ENCODE measurements at regions of chr17 and their contacts with region 1.

Region 1: DNA sequence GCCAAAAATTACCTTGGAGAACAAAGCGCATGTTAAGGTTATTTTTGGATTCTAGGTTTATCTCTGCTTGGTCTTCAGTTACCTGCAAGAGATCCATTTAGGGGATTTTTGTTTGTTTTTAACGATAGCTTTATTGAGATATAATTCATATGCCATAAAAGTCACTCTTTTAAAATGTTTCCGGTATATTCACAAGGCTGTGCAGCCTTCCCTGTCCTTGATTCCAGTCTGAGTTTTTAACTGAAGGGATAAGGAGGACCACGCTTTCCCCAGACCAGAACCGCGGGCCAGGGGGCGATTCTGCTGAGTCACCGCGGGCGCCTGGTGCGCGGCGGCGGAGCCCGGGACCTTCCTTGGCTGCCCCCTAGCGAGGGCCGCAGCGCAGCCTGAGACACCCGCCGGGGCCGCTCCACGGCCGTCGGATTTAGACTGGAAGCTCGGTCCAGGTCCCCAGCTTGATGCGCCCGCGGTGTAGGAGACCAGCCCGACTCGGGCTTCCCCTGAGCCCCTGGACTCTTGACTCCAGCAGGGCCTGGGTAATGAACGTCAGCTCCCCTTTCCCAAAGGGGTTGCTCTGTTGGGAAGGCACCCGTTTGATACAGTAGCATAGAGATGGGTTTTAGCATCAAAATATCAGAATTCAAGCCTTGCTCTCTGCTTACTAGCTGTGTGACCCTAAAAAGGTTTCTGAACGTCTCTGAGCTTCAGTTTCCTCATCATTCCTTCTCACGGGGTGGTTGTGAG is 50.0 kb upstream of the STH start:
- DNase-seq: peak; percentile 39 to 84
- H3K4me3 ChIP-seq: peak overlapping the region in 2 of 4 experiments; percentile 15 to 45; a peak in 3 of 8 replicates
- H3K27ac ChIP-seq: no peak overlapping the region
- H3K4me1 ChIP-seq: peaks cover 0 to 6% (median 2%) of the 10 kb centered on the region in 4 experiments; a peak in 4 of 7 replicates
- H3K27me3 ChIP-seq: peaks cover 0 to 12% (median 11%) of the 10 kb centered on the region in 4 experiments; a peak in 6 of 7 replicates
- CTCF ChIP-seq: peak; percentile 62 to 79 (median 65)
- EP300 ChIP-seq: peak in 1 of 2 experiments; percentile 21; a peak in 1 of 3 replicates
- POLR2A ChIP-seq: no peak
- RAD21 ChIP-seq: peak; percentile 55 to 67

Region 2: DNA sequence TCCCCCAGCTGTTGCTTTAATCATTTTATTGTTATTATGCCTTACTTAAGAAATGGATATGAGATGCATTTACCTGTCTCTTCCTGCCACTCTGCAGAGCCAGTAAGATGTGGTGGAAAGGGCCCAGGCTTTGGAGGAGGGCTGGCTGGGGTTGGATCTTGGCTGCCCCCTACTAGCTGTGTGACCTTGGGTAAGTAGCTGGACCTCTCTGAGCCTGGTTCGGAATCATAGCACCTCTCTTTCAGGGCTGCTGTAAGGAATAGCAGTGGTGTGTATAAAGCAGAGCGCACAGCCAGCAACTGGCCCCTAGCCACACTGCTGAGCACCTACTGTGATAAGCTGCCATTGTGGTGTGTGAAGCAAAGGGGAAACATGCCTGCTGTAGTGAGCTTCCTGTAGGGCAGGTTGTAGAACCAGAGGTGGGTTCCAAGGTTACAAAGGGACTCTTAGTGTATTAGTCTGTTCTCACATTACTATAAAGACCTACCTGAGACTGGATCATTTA is 30.8 kb before region 1 on chr17:
- CTCF ChIA-PET with region 1: interaction called, 13 read pairs
- POLR2A ChIA-PET with region 1: no interaction called
- DNase-seq: no peak
- H3K4me3 ChIP-seq: no peak overlapping the region
- H3K27ac ChIP-seq: no peak overlapping the region
- H3K4me1 ChIP-seq: no peaks in the 10 kb centered on the region
- H3K27me3 ChIP-seq: no peaks in the 10 kb centered on the region
- CTCF ChIP-seq: no peak
- EP300 ChIP-seq: no peak
- POLR2A ChIP-seq: no peak
- RAD21 ChIP-seq: no peak

Region 3: GRCh38 chr17:45965812-45966211 is 16.8 kb after region 1 on chr17:
- CTCF ChIA-PET with region 1: interaction called, 28 read pairs
- POLR2A ChIA-PET with region 1: interaction called, 3 read pairs
- DNase-seq: no peak
- H3K4me3 ChIP-seq: no peak overlapping the region
- H3K27ac ChIP-seq: no peak overlapping the region
- H3K4me1 ChIP-seq: no peaks in the 10 kb centered on the region
- H3K27me3 ChIP-seq: peaks cover 0 to 2% (median 0%) of the 10 kb centered on the region in 4 experiments; a peak in 1 of 7 replicates
- CTCF ChIP-seq: no peak
- EP300 ChIP-seq: no peak
- POLR2A ChIP-seq: no peak
- RAD21 ChIP-seq: no peak

Measured in H1 (cell line).